Dorsolateral prefrontal cortex (tissue), 120 donors: ENCODE measurements at regions of chr3 and their contacts with region 1.

Region 1: DNA sequence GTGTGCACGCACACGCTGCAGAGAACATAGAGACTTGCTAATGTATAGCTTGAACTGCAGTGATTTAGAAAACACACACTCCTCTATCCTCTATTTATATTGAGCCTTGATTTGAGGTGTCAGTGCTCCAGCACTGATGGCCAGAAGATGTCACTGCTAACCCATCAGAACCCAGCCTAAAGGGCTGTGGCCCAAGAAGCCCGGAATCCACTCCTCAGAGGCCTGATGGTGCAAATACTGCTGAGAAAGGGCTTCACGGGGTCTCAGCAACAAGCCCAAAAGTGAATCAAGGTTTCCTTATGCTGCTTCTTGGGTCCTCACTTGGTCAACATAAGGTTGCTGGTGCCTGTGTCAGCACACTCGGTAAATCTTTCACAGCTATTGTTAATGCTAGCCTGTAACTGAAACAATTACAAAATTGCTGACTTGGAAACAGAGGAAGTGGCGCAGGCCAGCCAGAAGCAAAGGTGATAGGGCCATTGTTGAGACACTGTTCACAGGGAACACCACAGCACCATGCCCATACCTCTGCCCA is 60.3 kb downstream of the HEG1 start:
- DNase-seq: peak; percentile 42 to 79 (median 71)
- H3K4me3 ChIP-seq: peak overlapping the region in 2 of 59 donors; percentile 6 to 29
- H3K27ac ChIP-seq: peak overlapping the region in 23 of 59 donors; percentile 1 to 73 (median 35)
- H3K27me3 ChIP-seq: no peaks in the 10 kb centered on the region
- CTCF ChIP-seq: peak; percentile 51 to 96 (median 84)

Region 2: DNA sequence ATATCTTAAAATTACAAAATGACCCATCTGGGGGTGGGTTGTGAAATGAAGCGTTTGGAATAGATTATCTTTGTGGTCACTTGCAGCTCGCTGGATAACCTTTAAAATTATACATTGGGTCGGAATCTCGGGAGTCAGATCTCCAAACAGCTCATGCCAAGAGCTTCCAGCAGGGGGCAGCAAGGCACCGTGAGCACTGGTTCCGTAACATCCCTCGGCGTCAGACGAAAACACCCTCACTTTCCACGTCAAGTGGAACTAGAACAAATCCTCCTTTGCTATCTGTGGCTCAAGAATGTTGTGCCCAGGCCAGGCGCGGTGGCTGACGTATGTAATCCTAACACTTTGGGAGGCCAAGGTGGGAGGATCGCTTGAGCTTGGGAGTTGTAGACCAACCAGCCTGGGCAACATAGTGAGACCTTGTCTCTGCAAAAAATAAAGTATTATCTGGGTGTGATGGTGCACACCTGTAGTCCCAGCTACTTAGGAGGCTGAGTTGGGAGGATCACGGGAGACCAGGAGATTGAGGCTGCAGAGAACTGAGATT is 234.2 kb before region 1 on chr3:
- intact Hi-C with region 1: loop called in 1 of 2 experiments (anchors 5 kb)
- DNase-seq: peak; percentile 76 to 93 (median 86)
- H3K4me3 ChIP-seq: peak overlapping the region in 22 of 59 donors; percentile 0 to 56 (median 22)
- H3K27ac ChIP-seq: peak overlapping the region in 24 of 59 donors; percentile 2 to 77 (median 38)
- H3K27me3 ChIP-seq: no peaks in the 10 kb centered on the region
- CTCF ChIP-seq: peak; percentile 92 to 99 (median 98)

Region 3: GRCh38 chr3:125165189-125165947 is 169.8 kb after region 1 on chr3:
- intact Hi-C with region 1: loop called (anchors 5 to 10 kb)
- DNase-seq: no peak
- H3K4me3 ChIP-seq: no peak overlapping the region
- H3K27ac ChIP-seq: no peak overlapping the region
- H3K27me3 ChIP-seq: no peaks in the 10 kb centered on the region
- CTCF ChIP-seq: peak in 54 of 56 donors; percentile 26 to 74 (median 56)

Region 4: DNA sequence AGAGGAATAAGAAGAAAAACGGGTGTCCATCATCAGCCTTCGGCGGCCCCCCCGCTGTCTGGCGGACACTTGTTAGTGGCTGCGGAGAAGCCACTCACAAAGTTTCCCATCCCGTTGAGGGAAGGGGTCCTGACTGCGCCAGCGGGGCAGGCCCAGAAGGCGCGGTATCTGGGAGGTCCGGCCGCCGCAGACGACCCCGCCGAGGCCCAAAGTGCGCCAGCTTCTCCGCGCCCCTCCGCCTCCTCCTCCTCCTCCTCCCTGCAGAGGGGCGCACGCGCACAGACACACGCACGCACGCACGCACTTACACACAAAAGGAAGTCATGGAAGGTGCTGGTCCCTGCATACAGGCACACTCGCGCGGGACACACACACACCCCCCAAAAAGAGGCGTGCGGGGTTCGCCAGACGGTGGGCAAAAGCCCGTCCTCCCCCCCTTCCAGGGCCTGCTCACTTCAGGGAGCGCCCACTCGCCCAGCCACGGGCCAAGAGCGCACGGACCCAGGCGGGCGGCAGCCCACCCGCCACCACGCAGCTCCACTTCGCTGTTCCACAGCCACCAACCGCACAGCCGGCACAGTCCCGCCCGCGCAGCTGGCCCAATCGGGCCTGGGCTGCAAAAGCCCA is 361.6 kb after region 1 on chr3:
- intact Hi-C with region 1: no loop called
- DNase-seq: peak in 5 of 10 donors; percentile 18 to 56 (median 52)
- H3K4me3 ChIP-seq: peak overlapping the region; percentile 49 to 85 (median 71)
- H3K27ac ChIP-seq: peak overlapping the region in 43 of 59 donors; percentile 3 to 82 (median 47)
- H3K27me3 ChIP-seq: no peaks in the 10 kb centered on the region
- CTCF ChIP-seq: peak in 1 of 56 donors; percentile 23

Region 5: DNA sequence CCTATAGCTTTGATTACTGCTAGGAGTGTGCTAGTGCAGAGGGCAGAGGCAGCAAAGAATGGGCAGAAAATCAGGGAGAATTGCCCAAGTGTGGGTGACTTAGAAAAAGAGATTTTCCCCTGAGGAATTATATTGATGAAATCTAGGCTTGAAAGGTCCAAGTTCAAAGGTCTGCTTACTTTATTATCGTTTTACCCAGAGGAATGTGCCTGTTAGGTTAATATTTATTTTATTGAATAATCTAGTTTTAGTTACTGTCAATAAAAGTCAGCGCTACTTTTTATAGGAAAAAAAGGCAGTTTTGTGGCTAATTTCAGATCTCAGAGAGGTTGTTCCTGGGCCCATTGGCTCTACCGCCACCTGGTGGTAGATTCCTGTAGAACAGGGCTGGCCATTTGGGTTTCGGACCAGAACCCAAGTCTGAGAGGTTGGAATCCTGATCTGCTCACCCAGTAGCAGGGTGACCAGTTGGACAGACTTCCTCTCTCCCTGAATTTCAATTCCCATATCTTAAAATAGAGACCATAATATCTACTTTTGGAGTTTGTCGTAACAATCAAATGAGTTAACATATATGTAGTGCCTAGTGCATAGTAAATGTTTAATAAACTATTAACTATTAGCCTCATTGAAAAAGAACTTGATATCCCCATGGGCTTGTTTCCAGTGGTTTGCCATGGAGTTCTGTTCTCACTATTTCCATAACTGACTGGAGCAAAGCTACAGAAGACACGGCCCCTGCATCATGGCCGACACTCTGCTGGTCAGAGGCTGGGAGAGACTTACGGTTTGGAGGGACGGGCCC is 442.3 kb after region 1 on chr3:
- intact Hi-C with region 1: loop called (anchors 1 to 5 kb)
- DNase-seq: peak; percentile 34 to 75 (median 62)
- H3K4me3 ChIP-seq: no peak overlapping the region
- H3K27ac ChIP-seq: no peak overlapping the region
- H3K27me3 ChIP-seq: no peaks in the 10 kb centered on the region
- CTCF ChIP-seq: peak; percentile 93 to 100 (median 98)

Region 6: DNA sequence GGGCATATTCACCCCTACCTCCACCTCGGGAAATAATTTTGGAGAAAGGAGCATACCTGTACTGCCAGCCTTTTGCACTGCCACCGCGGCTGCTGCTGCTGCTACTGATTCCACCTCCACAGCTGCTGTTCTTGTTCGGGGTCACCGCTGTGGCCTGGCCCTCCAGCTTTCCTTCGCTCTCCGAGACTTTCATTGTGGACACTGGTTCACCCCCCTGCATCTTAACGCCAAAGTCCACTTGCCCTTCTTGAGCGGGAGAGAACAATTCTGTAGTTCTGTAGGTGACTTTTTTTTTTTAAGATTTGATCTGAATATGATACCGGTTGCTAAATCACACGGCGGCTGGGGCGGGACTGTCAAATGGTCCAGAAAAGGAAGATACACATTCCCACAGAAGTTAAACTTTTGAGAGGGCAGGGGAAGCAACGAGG is 599.1 kb after region 1 on chr3:
- intact Hi-C with region 1: loop called (anchors 5 to 10 kb)
- DNase-seq: peak in 1 of 10 donors; percentile 5
- H3K4me3 ChIP-seq: peak overlapping the region; percentile 51 to 98 (median 87)
- H3K27ac ChIP-seq: peak overlapping the region; percentile 30 to 96 (median 91)
- H3K27me3 ChIP-seq: no peaks in the 10 kb centered on the region
- CTCF ChIP-seq: no peak